ENCODE measurements at regions of chr7 and their contacts with region 1.

Region 1: GRCh38 chr7:22726345-22727185 is 435 bp upstream of the IL6 start:
- DNase-seq: peak; percentile 79
- ATAC-seq: peak; percentile 92
- H3K4me3 Mint-ChIP-seq: peak overlapping the region; percentile 51
- H3K27ac Mint-ChIP-seq: peak overlapping the region; percentile 61
- H3K4me1 Mint-ChIP-seq: peaks cover 28% of the 10 kb centered on the region
- H3K27me3 Mint-ChIP-seq: peaks cover 31% of the 10 kb centered on the region

Region 2: DNA sequence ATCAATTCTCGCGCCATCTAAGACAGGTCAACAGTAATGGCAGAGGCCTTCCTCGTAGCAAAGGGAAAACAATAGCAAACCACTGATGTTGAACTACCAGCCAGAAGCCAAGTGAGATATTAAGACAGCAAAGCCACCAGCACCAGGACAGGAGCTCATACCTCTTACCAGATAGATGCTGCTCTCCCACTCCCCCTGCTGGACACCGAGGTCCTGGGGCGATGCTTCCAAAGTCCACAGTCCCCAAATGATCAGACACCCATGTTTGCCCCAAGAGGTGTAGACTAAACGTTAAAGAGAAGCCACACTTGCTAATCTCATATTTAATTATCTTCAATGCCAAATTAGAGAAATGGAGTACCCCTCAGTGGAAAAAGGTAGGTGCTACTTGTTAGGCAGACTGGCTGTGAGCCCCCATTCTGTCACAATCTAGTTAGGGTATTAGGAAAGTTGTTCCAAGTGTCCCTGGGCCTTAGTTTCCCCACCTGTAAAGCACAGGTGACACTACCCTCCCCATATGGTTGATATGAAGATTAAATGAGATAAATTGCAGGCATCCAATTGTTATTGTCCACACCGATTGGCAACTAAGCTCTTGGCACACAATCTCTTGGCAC is 56.2 kb after region 1 on chr7:
- CTCF ChIA-PET with region 1: interaction called, 18 read pairs
- POLR2A ChIA-PET with region 1: no interaction called
- intact Hi-C with region 1: no loop called
- DNase-seq: peak; percentile 89
- ATAC-seq: peak; percentile 88
- H3K4me3 Mint-ChIP-seq: no peak overlapping the region
- H3K27ac Mint-ChIP-seq: no peak overlapping the region
- H3K4me1 Mint-ChIP-seq: no peaks in the 10 kb centered on the region
- H3K27me3 Mint-ChIP-seq: peaks cover 3% of the 10 kb centered on the region

Region 3: GRCh38 chr7:22931011-22931410 is 204.4 kb after region 1 on chr7:
- CTCF ChIA-PET with region 1: no interaction called
- POLR2A ChIA-PET with region 1: no interaction called
- intact Hi-C with region 1: no loop called
- DNase-seq: no peak
- ATAC-seq: no peak
- H3K4me3 Mint-ChIP-seq: no peak overlapping the region
- H3K27ac Mint-ChIP-seq: no peak overlapping the region
- H3K4me1 Mint-ChIP-seq: no peaks in the 10 kb centered on the region
- H3K27me3 Mint-ChIP-seq: peaks cover 6% of the 10 kb centered on the region

Region 4: GRCh38 chr7:23298885-23299769 is 572.6 kb after region 1 on chr7 and contains the start of gene MALSU1:
- CTCF ChIA-PET with region 1: no interaction called
- POLR2A ChIA-PET with region 1: no interaction called
- intact Hi-C with region 1: no loop called
- DNase-seq: peak; percentile 99
- ATAC-seq: peak; percentile 97
- H3K4me3 Mint-ChIP-seq: peak within 1 kb of the TSS; percentile 98
- H3K27ac Mint-ChIP-seq: peak within 1 kb of the TSS; percentile 97
- H3K4me1 Mint-ChIP-seq: peaks cover 38% of the 10 kb centered on the region
- H3K27me3 Mint-ChIP-seq: no peaks in the 10 kb centered on the region
- total RNA-seq, gene MALSU1: 97.7 to 98.4 TPM